GM12878 (cell line): ENCODE measurements at regions of chr18 and their contacts with region 1.

Region 1: GRCh38 chr18:9913526-9914333 is at the start of gene VAPA:
- DNase-seq: peak; percentile 89
- ATAC-seq: peak; percentile 91
- H3K4me3 ChIP-seq: peak within 1 kb of the TSS; percentile 97
- H3K27ac ChIP-seq: peak within 1 kb of the TSS; percentile 93
- H3K4me1 ChIP-seq: peaks cover 3% of the 10 kb centered on the region; the same call in 1 of the 2 replicates
- H3K27me3 ChIP-seq: no peaks in the 10 kb centered on the region
- CTCF ChIP-seq: no peak
- EP300 ChIP-seq: 0 out of 4 replicates have a peak, but pooled peaks of 1 of the 2 experiments have one; percentile 18
- POLR2A ChIP-seq: peak; percentile 96
- RAD21 ChIP-seq: no peak
- polyA plus RNA-seq, gene VAPA: 70.9 to 73.1 TPM

Region 2: GRCh38 chr18:9898792-9899549 is 14.8 kb before region 1 on chr18:
- CTCF ChIA-PET with region 1: no interaction called
- POLR2A ChIA-PET with region 1: no interaction called
- RAD21 ChIA-PET with region 1: no interaction called
- SMC1A ChIA-PET with region 1: no interaction called
- in situ Hi-C with region 1: no loop called
- intact Hi-C with region 1: no loop called
- DNase-seq: no peak
- ATAC-seq: no peak
- H3K4me3 ChIP-seq: no peak overlapping the region
- H3K27ac ChIP-seq: no peak overlapping the region
- H3K4me1 ChIP-seq: no peaks in the 10 kb centered on the region
- H3K27me3 ChIP-seq: no peaks in the 10 kb centered on the region
- CTCF ChIP-seq: no peak
- EP300 ChIP-seq: no peak
- POLR2A ChIP-seq: no peak
- RAD21 ChIP-seq: no peak

Region 3: GRCh38 chr18:9925369-9925768 is 11.6 kb after region 1 on chr18:
- CTCF ChIA-PET with region 1: interaction called, 7 read pairs
- POLR2A ChIA-PET with region 1: interaction called, 7 read pairs
- RAD21 ChIA-PET with region 1: interaction called, 4 read pairs
- SMC1A ChIA-PET with region 1: interaction called, 13 read pairs
- in situ Hi-C with region 1: no loop called
- intact Hi-C with region 1: no loop called
- DNase-seq: no peak
- ATAC-seq: no peak
- H3K4me3 ChIP-seq: no peak overlapping the region
- H3K27ac ChIP-seq: no peak overlapping the region
- H3K4me1 ChIP-seq: peaks cover 26% of the 10 kb centered on the region
- H3K27me3 ChIP-seq: no peaks in the 10 kb centered on the region
- CTCF ChIP-seq: no peak
- EP300 ChIP-seq: no peak
- POLR2A ChIP-seq: no peak
- RAD21 ChIP-seq: no peak